Calu3 (cell line): ENCODE measurements at regions of chr7 and their contacts with region 1.

Region 1: GRCh38 chr7:111735661-111736551 is 173.6 kb upstream of the IMMP2L start:
- DNase-seq: peak; percentile 72
- H3K4me3 Mint-ChIP-seq: no peak overlapping the region
- H3K27ac Mint-ChIP-seq: no peak overlapping the region
- H3K4me1 Mint-ChIP-seq: peaks cover 11% of the 10 kb centered on the region
- H3K27me3 Mint-ChIP-seq: no peaks in the 10 kb centered on the region
- CTCF ChIP-seq: peak; percentile 68

Region 2: DNA sequence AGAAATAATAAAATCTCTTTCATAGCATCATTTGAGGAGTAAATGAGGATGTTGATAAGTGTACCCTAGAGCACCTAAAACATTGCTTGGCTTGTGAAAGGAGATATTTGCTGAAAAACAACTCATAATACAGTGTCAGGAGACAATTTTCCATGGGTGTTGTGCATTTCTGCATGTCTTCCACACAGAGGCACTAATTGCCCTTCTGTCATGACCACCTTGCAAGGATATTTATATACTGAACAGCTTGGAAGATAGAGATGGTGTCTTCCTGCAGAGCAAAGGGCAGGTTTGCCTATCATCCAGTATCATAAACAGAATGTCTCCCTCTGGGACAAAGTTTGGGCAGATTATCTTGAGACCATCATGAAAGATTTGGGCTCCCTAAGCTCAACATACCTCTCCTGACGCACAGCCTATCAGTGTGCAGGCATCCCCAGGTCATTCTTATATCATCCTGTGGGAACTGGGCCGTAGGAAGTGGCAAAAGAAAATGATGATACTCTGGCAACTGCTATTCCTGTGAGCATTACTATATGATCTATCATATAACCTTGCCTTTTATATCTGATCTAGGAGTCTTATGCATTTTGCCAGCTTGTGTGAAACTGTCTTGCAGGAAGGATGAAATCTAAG is 1140.1 kb before region 1 on chr7:
- CTCF ChIA-PET with region 1: no interaction called
- intact Hi-C with region 1: loop called (anchors 10 kb)
- DNase-seq: no peak
- H3K4me3 Mint-ChIP-seq: no peak overlapping the region
- H3K27ac Mint-ChIP-seq: no peak overlapping the region
- H3K4me1 Mint-ChIP-seq: no peaks in the 10 kb centered on the region
- H3K27me3 Mint-ChIP-seq: no peaks in the 10 kb centered on the region
- CTCF ChIP-seq: no peak

Region 3: DNA sequence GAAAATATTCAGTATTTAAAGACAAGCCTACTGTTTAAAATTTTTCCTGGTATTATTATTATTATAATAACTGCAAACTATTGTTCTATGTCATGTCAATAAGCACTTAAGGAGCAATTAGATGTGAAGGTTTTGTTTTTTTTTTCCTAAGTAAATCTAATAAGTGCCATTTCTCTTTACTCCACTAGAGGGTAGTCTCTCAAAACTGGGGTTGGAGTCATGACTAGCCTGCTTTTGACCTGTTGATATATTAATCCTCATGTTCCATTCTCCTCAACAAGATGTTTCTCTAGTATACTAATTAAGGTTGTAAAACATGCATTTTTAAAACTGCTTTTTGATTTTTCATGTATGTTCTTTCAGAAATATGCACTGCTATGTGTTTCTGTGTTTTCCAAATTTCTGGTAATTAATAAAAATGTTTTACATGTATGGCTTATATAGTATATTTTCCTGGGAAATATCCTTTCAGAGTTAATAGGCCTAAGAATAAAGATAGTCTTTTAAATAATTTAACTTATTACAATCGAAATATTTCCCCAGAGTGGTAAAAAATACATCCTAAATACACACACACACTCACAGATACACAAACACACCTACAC is 646.0 kb before region 1 on chr7:
- CTCF ChIA-PET with region 1: no interaction called
- intact Hi-C with region 1: loop called (anchors 2 kb)
- DNase-seq: no peak
- H3K4me3 Mint-ChIP-seq: no peak overlapping the region
- H3K27ac Mint-ChIP-seq: no peak overlapping the region
- H3K4me1 Mint-ChIP-seq: no peaks in the 10 kb centered on the region
- H3K27me3 Mint-ChIP-seq: no peaks in the 10 kb centered on the region
- CTCF ChIP-seq: no peak

Region 4: GRCh38 chr7:111223802-111224253 is 512.1 kb before region 1 on chr7:
- CTCF ChIA-PET with region 1: no interaction called
- intact Hi-C with region 1: no loop called
- DNase-seq: no peak
- H3K4me3 Mint-ChIP-seq: no peak overlapping the region
- H3K27ac Mint-ChIP-seq: no peak overlapping the region
- H3K4me1 Mint-ChIP-seq: no peaks in the 10 kb centered on the region
- H3K27me3 Mint-ChIP-seq: no peaks in the 10 kb centered on the region
- CTCF ChIP-seq: no peak

Region 5: GRCh38 chr7:111329367-111330234 is 406.3 kb before region 1 on chr7:
- CTCF ChIA-PET with region 1: no interaction called
- intact Hi-C with region 1: loop called (anchors 1 kb)
- DNase-seq: no peak
- H3K4me3 Mint-ChIP-seq: no peak overlapping the region
- H3K27ac Mint-ChIP-seq: no peak overlapping the region
- H3K4me1 Mint-ChIP-seq: peaks cover 8% of the 10 kb centered on the region
- H3K27me3 Mint-ChIP-seq: no peaks in the 10 kb centered on the region
- CTCF ChIP-seq: no peak